Psoas muscle (tissue), 8 donors: ENCODE measurements at regions of chr19 and their contacts with region 1.

Region 1: GRCh38 chr19:41263850-41264580 is at the start of gene HNRNPUL1:
- DNase-seq: peak; percentile 97 to 99
- ATAC-seq: peak; percentile 83 to 88 (median 84)
- H3K4me3 ChIP-seq: peak within 1 kb of the TSS; percentile 99
- H3K27ac ChIP-seq: peak within 1 kb of the TSS; percentile 98
- H3K4me1 ChIP-seq: peaks cover 23% of the 10 kb centered on the region
- H3K27me3 ChIP-seq: no peaks in the 10 kb centered on the region
- CTCF ChIP-seq: peak; percentile 31
- total RNA-seq, gene HNRNPUL1: 82.2 to 129 (median 105) TPM

Region 2: DNA sequence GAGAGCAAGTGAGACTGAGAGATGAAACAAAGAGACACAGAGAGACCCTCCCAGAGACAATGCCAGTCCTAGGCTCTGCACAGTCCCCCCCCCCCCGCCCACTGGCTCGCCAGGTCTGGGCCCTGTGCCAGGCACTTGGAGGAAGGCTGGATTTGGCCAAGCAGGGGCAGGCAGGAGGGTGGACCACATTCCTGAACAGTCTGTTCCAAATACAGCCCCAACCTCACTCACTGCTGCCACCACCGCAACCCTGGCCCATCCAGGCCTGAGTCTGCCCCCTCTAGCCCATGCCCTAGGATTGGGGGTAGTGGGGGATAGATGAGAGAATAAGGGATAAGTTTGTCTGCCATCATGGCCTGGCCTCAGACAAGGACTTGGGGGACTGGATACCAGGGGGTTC is 130.8 kb before region 1 on chr19:
- intact Hi-C with region 1: loop called (anchors 2 to 5 kb)
- DNase-seq: no peak
- ATAC-seq: no peak
- H3K4me3 ChIP-seq: no peak overlapping the region
- H3K27ac ChIP-seq: no peak overlapping the region
- H3K4me1 ChIP-seq: no peaks in the 10 kb centered on the region
- H3K27me3 ChIP-seq: peaks cover 0 to 14% (median 0%) of the 10 kb centered on the region in 3 donors
- CTCF ChIP-seq: no peak

Region 3: GRCh38 chr19:41206926-41207750 is 56.9 kb before region 1 on chr19:
- intact Hi-C with region 1: loop called (anchors 1 to 2 kb)
- DNase-seq: peak; percentile 83 to 94
- ATAC-seq: peak in 3 of 4 donors; percentile 53 to 79 (median 60)
- H3K4me3 ChIP-seq: peak overlapping the region; percentile 11
- H3K27ac ChIP-seq: peak overlapping the region; percentile 23
- H3K4me1 ChIP-seq: no peaks in the 10 kb centered on the region
- H3K27me3 ChIP-seq: peaks cover 0 to 4% (median 0%) of the 10 kb centered on the region in 3 donors
- CTCF ChIP-seq: no peak

Region 4: DNA sequence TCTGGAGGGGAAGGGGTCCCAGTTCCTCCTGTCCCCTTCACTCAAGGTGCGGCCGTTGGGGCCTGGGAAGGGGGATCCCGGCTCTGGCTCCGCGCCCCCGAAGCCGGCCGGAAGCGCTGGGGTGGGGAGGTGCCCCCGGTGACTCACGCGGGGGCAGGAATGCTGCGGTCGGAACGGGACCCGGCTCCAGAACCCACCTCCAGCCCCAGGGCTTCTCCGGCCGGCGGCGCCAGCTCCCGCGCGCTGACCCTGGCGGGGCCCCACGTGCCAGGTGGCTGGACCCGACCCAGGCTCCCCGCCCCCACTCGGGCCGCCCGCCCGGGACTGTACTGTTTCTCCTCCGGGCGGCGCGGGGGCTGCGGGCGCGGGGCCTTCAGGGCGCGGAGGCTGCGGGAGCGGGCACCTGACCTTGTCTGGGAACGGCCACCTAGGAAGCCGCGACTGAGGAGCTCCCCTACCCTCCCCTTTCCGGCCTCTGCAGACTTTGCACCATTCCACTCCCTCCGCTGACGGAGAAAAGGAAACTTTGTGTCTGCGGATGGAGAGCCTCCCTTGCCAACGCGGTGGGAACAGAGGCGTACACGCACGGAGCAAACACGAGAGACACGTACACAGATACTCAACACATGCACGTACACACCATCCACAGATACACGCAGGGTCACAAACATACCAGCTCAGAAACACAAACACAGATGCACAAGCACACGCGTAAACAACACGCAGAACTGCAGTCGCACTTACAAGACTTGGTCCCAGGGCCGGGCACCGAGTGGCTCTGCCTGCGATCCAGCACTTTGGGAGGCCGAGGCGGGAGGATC is 37.8 kb before region 1 on chr19:
- intact Hi-C with region 1: loop called (anchors 5 kb)
- DNase-seq: peak; percentile 79 to 83
- ATAC-seq: peak; percentile 76 to 90 (median 84)
- H3K4me3 ChIP-seq: peak overlapping the region; percentile 62
- H3K27ac ChIP-seq: peak overlapping the region; percentile 46
- H3K4me1 ChIP-seq: no peaks in the 10 kb centered on the region
- H3K27me3 ChIP-seq: peaks cover 0 to 53% (median 0%) of the 10 kb centered on the region in 3 donors
- CTCF ChIP-seq: no peak

Region 5: DNA sequence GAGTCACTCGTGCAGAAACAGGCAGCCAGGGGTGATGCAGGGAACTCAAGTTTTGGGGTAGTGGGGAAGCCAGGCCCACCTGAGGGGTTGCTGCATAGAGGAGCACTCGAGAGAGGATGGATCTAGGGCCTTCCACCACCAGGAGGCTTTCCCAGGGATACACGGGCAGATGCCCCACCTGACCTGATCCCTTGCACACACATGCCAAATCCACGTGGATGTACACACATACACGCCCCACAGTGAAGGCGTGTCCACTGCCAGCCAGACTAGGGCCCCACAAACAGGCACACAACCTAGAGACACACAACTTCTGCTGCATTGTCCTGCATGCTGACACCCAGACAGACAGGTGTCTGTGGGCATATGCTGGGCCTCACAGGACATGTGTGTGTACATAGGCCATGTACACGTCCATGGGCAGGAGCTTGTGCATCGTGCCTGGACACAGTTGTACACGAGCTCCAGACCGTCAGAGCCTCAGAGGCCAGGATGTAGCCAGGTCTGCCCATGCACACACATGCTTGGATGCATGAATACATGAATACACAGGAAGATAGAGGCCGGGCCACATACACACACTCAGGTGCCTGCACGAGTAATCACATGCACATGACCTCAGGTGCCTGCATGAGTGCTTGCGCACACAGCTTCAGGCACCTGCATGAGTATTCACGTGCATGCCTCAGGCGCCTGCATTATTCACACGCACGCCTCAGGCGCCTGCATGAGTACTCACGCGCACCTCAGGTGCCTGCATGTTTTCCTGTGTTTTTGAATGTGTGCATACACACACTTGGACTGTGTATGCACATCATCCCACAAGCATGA is 54.9 kb after region 1 on chr19:
- intact Hi-C with region 1: no loop called
- DNase-seq: peak in 1 of 2 donors; percentile 40
- ATAC-seq: no peak
- H3K4me3 ChIP-seq: no peak overlapping the region
- H3K27ac ChIP-seq: no peak overlapping the region
- H3K4me1 ChIP-seq: peaks cover 14% of the 10 kb centered on the region
- H3K27me3 ChIP-seq: no peaks in the 10 kb centered on the region
- CTCF ChIP-seq: no peak